Naive thymus-derived CD4-positive, alpha-beta T cell (primary cell): ENCODE measurements at regions of chr4 and their contacts with region 1.

Region 1: GRCh38 chr4:98995183-98996055 is at the start of gene METAP1:
- DNase-seq: peak; percentile 94 to 97 (median 96)
- ATAC-seq: peak; percentile 90
- H3K4me3 ChIP-seq: peak within 1 kb of the TSS; percentile 91
- H3K4me3 Mint-ChIP-seq: peak within 1 kb of the TSS; percentile 79 to 98 (median 94)
- H3K27ac ChIP-seq: peak within 1 kb of the TSS; percentile 92
- H3K27ac Mint-ChIP-seq: peak within 1 kb of the TSS; percentile 97 to 99 (median 99)
- H3K4me1 ChIP-seq: peaks cover 10 to 13% of the 10 kb centered on the region in 2 donors
- H3K4me1 Mint-ChIP-seq: peaks cover 28 to 49% (median 42%) of the 10 kb centered on the region in 7 donors
- H3K27me3 ChIP-seq: no peaks in the 10 kb centered on the region
- H3K27me3 Mint-ChIP-seq: no peaks in the 10 kb centered on the region
- total RNA-seq, gene METAP1: 29.1 to 50.7 (median 40.2) TPM

Region 2: DNA sequence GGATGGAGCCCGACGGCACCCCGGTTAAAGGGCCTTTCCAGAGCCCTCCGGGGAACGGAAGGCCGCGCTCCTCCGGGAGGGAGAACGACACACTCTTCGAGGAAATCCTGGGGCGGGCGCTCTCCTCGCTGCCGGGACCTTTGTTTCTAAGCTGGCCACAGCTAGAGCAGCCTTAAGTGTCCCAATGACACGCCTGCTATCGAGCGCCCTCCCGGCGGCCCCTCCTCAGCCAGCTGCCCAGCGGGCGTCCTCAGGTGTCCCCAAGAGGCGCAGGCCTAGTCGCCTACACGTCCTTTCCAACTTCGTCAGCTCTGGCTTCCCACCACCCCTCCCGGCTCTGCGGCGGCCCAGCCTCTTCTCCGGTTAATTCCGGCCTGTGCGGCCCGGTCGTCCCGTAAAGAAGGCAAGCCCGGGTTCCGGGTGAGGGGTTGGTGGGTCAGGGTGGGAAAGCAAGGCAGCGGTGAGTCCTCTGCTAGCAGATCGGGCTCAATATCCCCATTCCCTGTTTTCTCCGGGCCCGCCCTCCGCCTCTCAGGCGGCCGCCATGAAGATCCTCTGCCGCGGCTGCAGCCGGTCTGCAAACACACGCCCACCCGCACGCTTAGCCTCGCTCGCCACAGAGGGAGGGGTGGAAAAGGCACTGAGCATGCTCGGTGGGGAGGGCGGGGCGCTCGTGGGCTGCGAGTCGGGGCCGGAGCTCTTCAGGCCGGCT is 734.7 kb before region 1 on chr4:
- CTCF ChIA-PET with region 1: no interaction called
- POLR2A ChIA-PET with region 1: interaction called, 8 read pairs
- intact Hi-C with region 1: loop called (anchors 1 kb)
- DNase-seq: peak in 6 of 9 donors; percentile 69 to 95 (median 78)
- ATAC-seq: peak; percentile 85
- H3K4me3 ChIP-seq: peak overlapping the region; percentile 90
- H3K4me3 Mint-ChIP-seq: peak overlapping the region; percentile 92 to 98 (median 94)
- H3K27ac ChIP-seq: peak overlapping the region; percentile 86
- H3K27ac Mint-ChIP-seq: peak overlapping the region; percentile 84 to 97 (median 92)
- H3K4me1 ChIP-seq: peaks cover 5 to 12% of the 10 kb centered on the region in 2 donors
- H3K4me1 Mint-ChIP-seq: peaks cover 31 to 60% (median 54%) of the 10 kb centered on the region in 7 donors
- H3K27me3 ChIP-seq: no peaks in the 10 kb centered on the region
- H3K27me3 Mint-ChIP-seq: no peaks in the 10 kb centered on the region

Region 3: DNA sequence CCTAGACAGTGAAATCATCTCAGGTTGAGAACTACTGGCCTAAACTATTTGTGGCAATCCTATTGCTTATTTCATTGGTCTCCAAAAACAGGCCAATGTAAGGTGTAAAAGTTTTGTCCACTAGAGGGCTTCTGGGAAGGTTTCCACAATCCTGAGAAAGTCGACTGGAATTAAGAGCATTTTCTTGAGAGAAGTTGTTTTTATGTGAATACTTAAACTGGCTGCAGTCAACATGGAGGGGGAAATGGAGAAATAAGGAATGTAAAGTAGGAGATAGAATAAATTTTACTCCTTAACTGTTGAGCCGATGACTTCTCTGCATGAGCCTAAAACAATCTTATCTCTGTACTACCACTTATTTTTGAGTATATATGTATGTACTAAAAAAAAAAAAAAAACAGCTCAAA is 55.5 kb before region 1 on chr4:
- CTCF ChIA-PET with region 1: interaction called, 8 read pairs
- POLR2A ChIA-PET with region 1: no interaction called
- intact Hi-C with region 1: loop called in 1 of 2 experiments (anchors 2 kb)
- DNase-seq: peak in 5 of 9 donors; percentile 9 to 26 (median 17)
- ATAC-seq: peak; percentile 63
- H3K4me3 ChIP-seq: no peak overlapping the region
- H3K4me3 Mint-ChIP-seq: no peak overlapping the region
- H3K27ac ChIP-seq: no peak overlapping the region
- H3K27ac Mint-ChIP-seq: no peak overlapping the region
- H3K4me1 ChIP-seq: no peaks in the 10 kb centered on the region
- H3K4me1 Mint-ChIP-seq: peaks cover 4 to 15% (median 9%) of the 10 kb centered on the region in 7 donors
- H3K27me3 ChIP-seq: no peaks in the 10 kb centered on the region
- H3K27me3 Mint-ChIP-seq: no peaks in the 10 kb centered on the region

Region 4: GRCh38 chr4:99054428-99054994 is 59.1 kb after region 1 on chr4:
- CTCF ChIA-PET with region 1: interaction called, 126 read pairs
- POLR2A ChIA-PET with region 1: interaction called, 40 read pairs
- intact Hi-C with region 1: loop called (anchors 1 kb)
- DNase-seq: no peak
- ATAC-seq: no peak
- H3K4me3 ChIP-seq: no peak overlapping the region
- H3K4me3 Mint-ChIP-seq: peak overlapping the region in 1 of 10 donors; percentile 16
- H3K27ac ChIP-seq: no peak overlapping the region
- H3K27ac Mint-ChIP-seq: peak overlapping the region in 8 of 9 donors; percentile 23 to 83 (median 34)
- H3K4me1 ChIP-seq: peaks cover 4 to 6% of the 10 kb centered on the region in 2 donors
- H3K4me1 Mint-ChIP-seq: peaks cover 7 to 42% (median 13%) of the 10 kb centered on the region in 7 donors
- H3K27me3 ChIP-seq: no peaks in the 10 kb centered on the region
- H3K27me3 Mint-ChIP-seq: no peaks in the 10 kb centered on the region

Region 5: GRCh38 chr4:99462875-99463464 is 467.6 kb after region 1 on chr4:
- CTCF ChIA-PET with region 1: interaction called, 3 read pairs
- POLR2A ChIA-PET with region 1: no interaction called
- intact Hi-C with region 1: loop called in 1 of 2 experiments (anchors 1 kb)
- DNase-seq: peak in 8 of 9 donors; percentile 16 to 62 (median 44)
- ATAC-seq: peak; percentile 82
- H3K4me3 ChIP-seq: no peak overlapping the region
- H3K4me3 Mint-ChIP-seq: no peak overlapping the region
- H3K27ac ChIP-seq: no peak overlapping the region
- H3K27ac Mint-ChIP-seq: no peak overlapping the region
- H3K4me1 ChIP-seq: no peaks in the 10 kb centered on the region
- H3K4me1 Mint-ChIP-seq: no peaks in the 10 kb centered on the region
- H3K27me3 ChIP-seq: no peaks in the 10 kb centered on the region
- H3K27me3 Mint-ChIP-seq: peaks cover 0 to 35% (median 8%) of the 10 kb centered on the region in 5 donors

Region 6: GRCh38 chr4:99808260-99808857 is 812.9 kb after region 1 on chr4:
- CTCF ChIA-PET with region 1: no interaction called
- POLR2A ChIA-PET with region 1: no interaction called
- intact Hi-C with region 1: loop called in 1 of 2 experiments (anchors 1 kb)
- DNase-seq: peak; percentile 28 to 78 (median 72)
- ATAC-seq: peak; percentile 92
- H3K4me3 ChIP-seq: no peak overlapping the region
- H3K4me3 Mint-ChIP-seq: no peak overlapping the region
- H3K27ac ChIP-seq: no peak overlapping the region
- H3K27ac Mint-ChIP-seq: no peak overlapping the region
- H3K4me1 ChIP-seq: no peaks in the 10 kb centered on the region
- H3K4me1 Mint-ChIP-seq: peaks cover 4 to 10% (median 5%) of the 10 kb centered on the region in 7 donors
- H3K27me3 ChIP-seq: no peaks in the 10 kb centered on the region
- H3K27me3 Mint-ChIP-seq: peaks cover 0 to 17% (median 7%) of the 10 kb centered on the region in 5 donors